GM13977 (cell line): ENCODE measurements at regions of chr12 and their contacts with region 1.

Region 1: DNA sequence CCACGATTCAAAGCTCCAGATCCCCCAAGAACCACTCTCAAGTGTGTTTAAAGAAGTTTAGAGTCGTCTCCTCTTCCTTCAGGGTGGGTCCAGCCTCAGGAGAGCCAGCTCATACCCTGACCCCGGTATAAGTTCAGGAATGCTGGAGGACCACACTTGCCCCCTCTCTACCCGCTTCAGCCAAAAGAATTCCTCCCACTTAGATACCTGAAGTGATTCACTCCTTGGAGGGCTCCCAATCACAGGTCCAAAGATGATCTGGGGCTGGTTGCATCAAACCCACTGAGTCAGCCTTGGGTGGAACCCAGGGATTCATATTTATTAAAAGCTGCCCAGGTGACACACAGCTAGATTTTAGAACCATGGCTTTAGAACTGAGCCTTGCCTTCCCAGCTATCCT is 133.5 kb upstream of the PARP11 start:
- DNase-seq: no peak
- CTCF ChIP-seq: no peak

Region 2: GRCh38 chr12:4287325-4288211 is 280.8 kb after region 1 on chr12:
- in situ Hi-C with region 1: loop called (anchors 10 kb)
- DNase-seq: no peak
- CTCF ChIP-seq: no peak